Heart left ventricle (tissue), 16 donors: ENCODE measurements at regions of chr5 and their contacts with region 1.

Region 1: GRCh38 chr5:67809589-67809988 is 406.0 kb upstream of the PIK3R1 start:
- DNase-seq: no peak
- ATAC-seq: no peak
- H3K4me3 ChIP-seq: no peak overlapping the region
- H3K27ac ChIP-seq: peak overlapping the region in 11 of 12 donors; percentile 6 to 90 (median 78)
- H3K4me1 ChIP-seq: peaks cover 0 to 42% (median 19%) of the 10 kb centered on the region in 12 donors
- H3K27me3 ChIP-seq: no peaks in the 10 kb centered on the region
- CTCF ChIP-seq: no peak
- POLR2A ChIP-seq: no peak

Region 2: GRCh38 chr5:67648201-67648671 is 161.4 kb before region 1 on chr5:
- intact Hi-C with region 1: loop called in 1 of 10 experiments (anchors 10 kb)
- DNase-seq: peak; percentile 75 to 90 (median 85)
- ATAC-seq: peak; percentile 97 to 98 (median 98)
- H3K4me3 ChIP-seq: no peak overlapping the region
- H3K27ac ChIP-seq: peak overlapping the region in 9 of 12 donors; percentile 44 to 87 (median 68)
- H3K4me1 ChIP-seq: peaks cover 0 to 38% (median 12%) of the 10 kb centered on the region in 12 donors
- H3K27me3 ChIP-seq: no peaks in the 10 kb centered on the region
- CTCF ChIP-seq: no peak
- POLR2A ChIP-seq: no peak

Region 3: GRCh38 chr5:67855523-67855922 is 45.9 kb after region 1 on chr5:
- intact Hi-C with region 1: no loop called
- DNase-seq: no peak
- ATAC-seq: no peak
- H3K4me3 ChIP-seq: no peak overlapping the region
- H3K27ac ChIP-seq: no peak overlapping the region
- H3K4me1 ChIP-seq: no peaks in the 10 kb centered on the region
- H3K27me3 ChIP-seq: no peaks in the 10 kb centered on the region
- CTCF ChIP-seq: no peak
- POLR2A ChIP-seq: no peak

Region 4: GRCh38 chr5:68159224-68159951 is 349.8 kb after region 1 on chr5:
- intact Hi-C with region 1: no loop called
- DNase-seq: no peak
- ATAC-seq: peak in 3 of 4 donors; percentile 34 to 69 (median 64)
- H3K4me3 ChIP-seq: no peak overlapping the region
- H3K27ac ChIP-seq: peak overlapping the region in 1 of 12 donors; percentile 34
- H3K4me1 ChIP-seq: no peaks in the 10 kb centered on the region
- H3K27me3 ChIP-seq: no peaks in the 10 kb centered on the region
- CTCF ChIP-seq: no peak
- POLR2A ChIP-seq: no peak

Region 5: DNA sequence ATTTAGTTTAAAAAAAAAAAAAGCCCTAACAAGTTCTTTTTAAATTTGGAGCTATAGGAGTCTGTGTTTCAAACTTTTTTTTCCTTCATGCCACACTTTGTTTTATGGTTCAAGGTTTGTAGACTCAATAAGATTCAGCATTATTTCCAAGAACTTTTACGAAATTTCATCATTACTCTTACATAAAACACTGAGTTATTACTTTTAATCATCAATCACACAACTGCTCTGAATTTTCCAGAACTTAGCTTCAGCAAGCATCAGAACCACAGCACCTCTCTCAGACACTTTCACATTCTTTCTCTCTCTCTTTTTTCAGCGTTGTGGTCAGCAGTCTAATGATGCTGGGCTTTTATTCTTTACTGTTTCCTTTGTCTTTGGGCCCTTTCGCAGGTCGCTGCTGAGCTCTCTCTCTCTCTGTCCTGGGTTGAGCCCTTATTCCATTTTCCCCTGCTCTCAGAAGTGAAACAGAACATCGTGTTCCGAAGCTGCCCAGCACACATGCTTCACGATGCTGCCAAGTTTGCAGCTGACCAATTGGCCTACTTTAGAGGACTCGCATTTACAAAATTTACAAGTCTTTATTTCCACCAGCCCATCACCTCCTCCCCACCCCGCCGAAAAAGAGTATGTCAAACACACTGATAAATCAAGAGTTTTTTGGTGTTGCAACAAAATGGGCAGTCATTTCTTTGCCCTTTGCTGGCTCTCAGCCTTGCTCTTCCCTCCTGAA is 361.4 kb after region 1 on chr5:
- intact Hi-C with region 1: loop called in 1 of 10 experiments (anchors 5 kb)
- DNase-seq: peak in 4 of 5 donors; percentile 31 to 79 (median 60)
- ATAC-seq: peak; percentile 92 to 98 (median 96)
- H3K4me3 ChIP-seq: peak overlapping the region in 4 of 12 donors; percentile 6 to 17 (median 16)
- H3K27ac ChIP-seq: peak overlapping the region; percentile 41 to 85 (median 68)
- H3K4me1 ChIP-seq: peaks cover 0 to 35% (median 8%) of the 10 kb centered on the region in 12 donors
- H3K27me3 ChIP-seq: no peaks in the 10 kb centered on the region
- CTCF ChIP-seq: no peak
- POLR2A ChIP-seq: no peak

Region 6: GRCh38 chr5:68261569-68262065 is 452.0 kb after region 1 on chr5:
- intact Hi-C with region 1: loop called in 5 of 10 experiments (anchors 5 to 10 kb)
- DNase-seq: no peak
- ATAC-seq: peak in 1 of 4 donors; percentile 18
- H3K4me3 ChIP-seq: no peak overlapping the region
- H3K27ac ChIP-seq: peak overlapping the region; percentile 9 to 85 (median 78)
- H3K4me1 ChIP-seq: peaks cover 11 to 96% (median 88%) of the 10 kb centered on the region in 12 donors
- H3K27me3 ChIP-seq: no peaks in the 10 kb centered on the region
- CTCF ChIP-seq: peak in 6 of 12 donors; percentile 9 to 41 (median 28)
- POLR2A ChIP-seq: no peak